ENCODE measurements at regions of chr13 and their contacts with region 1.

Region 1: GRCh38 chr13:73325711-73326558 is 267.1 kb downstream of the KLF5 start:
- DNase-seq: peak; percentile 45
- H3K4me3 Mint-ChIP-seq: no peak overlapping the region
- H3K27ac Mint-ChIP-seq: peak overlapping the region; percentile 83
- H3K4me1 Mint-ChIP-seq: peaks cover 11% of the 10 kb centered on the region
- H3K27me3 Mint-ChIP-seq: no peaks in the 10 kb centered on the region
- CTCF ChIP-seq: no peak

Region 2: GRCh38 chr13:73074036-73074435 is 251.9 kb before region 1 on chr13:
- CTCF ChIA-PET with region 1: no interaction called
- intact Hi-C with region 1: loop called (anchors 5 kb)
- DNase-seq: no peak
- H3K4me3 Mint-ChIP-seq: peak overlapping the region; percentile 55
- H3K27ac Mint-ChIP-seq: peak overlapping the region; percentile 93
- H3K4me1 Mint-ChIP-seq: no peaks in the 10 kb centered on the region
- H3K27me3 Mint-ChIP-seq: no peaks in the 10 kb centered on the region
- CTCF ChIP-seq: no peak

Region 3: GRCh38 chr13:73215807-73216206 is 110.1 kb before region 1 on chr13:
- CTCF ChIA-PET with region 1: no interaction called
- intact Hi-C with region 1: loop called (anchors 1 kb)
- DNase-seq: peak; percentile 55
- H3K4me3 Mint-ChIP-seq: peak overlapping the region; percentile 14
- H3K27ac Mint-ChIP-seq: peak overlapping the region; percentile 79
- H3K4me1 Mint-ChIP-seq: peaks cover 24% of the 10 kb centered on the region
- H3K27me3 Mint-ChIP-seq: no peaks in the 10 kb centered on the region
- CTCF ChIP-seq: no peak

Region 4: GRCh38 chr13:73248711-73249578 is 77.0 kb before region 1 on chr13:
- CTCF ChIA-PET with region 1: no interaction called
- intact Hi-C with region 1: loop called (anchors 5 kb)
- DNase-seq: peak; percentile 36
- H3K4me3 Mint-ChIP-seq: no peak overlapping the region
- H3K27ac Mint-ChIP-seq: peak overlapping the region; percentile 90
- H3K4me1 Mint-ChIP-seq: peaks cover 11% of the 10 kb centered on the region
- H3K27me3 Mint-ChIP-seq: no peaks in the 10 kb centered on the region
- CTCF ChIP-seq: no peak

Region 5: DNA sequence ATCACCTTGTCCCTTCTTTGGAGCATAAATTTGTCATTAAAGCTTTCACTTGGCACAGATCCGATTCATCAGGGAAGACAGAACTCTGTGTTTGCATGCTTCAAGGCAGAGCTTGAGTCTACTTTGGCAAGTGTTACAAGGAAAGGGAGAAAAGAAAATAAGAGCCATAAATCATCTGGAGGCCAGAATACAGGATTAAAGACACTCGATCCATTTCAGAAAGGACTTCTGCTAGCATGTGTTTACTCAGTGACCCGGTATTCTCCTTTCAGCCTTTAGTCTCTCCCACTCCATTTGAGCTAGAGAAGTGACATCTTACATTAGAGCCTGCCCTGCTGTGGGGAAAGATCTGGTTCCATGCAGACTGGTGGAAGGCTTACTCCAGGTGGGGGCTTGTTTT is 39.3 kb after region 1 on chr13:
- CTCF ChIA-PET with region 1: no interaction called
- intact Hi-C with region 1: loop called (anchors 5 kb)
- DNase-seq: peak; percentile 14
- H3K4me3 Mint-ChIP-seq: peak overlapping the region; percentile 19
- H3K27ac Mint-ChIP-seq: no peak overlapping the region
- H3K4me1 Mint-ChIP-seq: no peaks in the 10 kb centered on the region
- H3K27me3 Mint-ChIP-seq: no peaks in the 10 kb centered on the region
- CTCF ChIP-seq: no peak

Region 6: DNA sequence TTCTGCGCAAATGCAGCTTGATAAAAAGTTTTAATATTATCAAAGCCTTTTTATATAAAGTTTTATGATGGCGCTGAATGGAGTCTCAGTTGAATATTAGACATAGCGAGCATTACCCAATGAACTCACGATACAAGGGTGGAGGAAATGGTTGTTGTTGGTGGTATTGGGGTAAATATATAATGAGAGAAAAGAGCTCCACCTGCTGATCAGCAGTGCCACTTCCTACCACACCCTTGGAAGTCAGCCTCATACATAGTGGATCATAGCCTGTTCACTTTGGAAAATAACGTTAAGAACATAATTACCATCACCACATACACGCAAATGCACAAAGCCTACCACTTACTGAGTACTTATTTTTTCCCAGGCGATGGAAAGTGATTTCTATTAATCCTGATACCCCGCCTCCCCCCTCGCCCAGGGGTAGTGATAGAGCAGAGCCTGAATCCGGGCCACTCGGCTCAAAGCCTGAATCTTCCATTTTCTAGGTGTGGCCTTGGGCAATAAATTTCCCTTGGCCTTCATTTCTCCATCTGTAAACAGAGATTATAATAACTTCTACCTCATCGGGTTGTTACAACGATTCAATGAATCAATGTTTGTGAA is 91.2 kb after region 1 on chr13:
- CTCF ChIA-PET with region 1: interaction called, 3 read pairs
- intact Hi-C with region 1: loop called (anchors 5 kb)
- DNase-seq: no peak
- H3K4me3 Mint-ChIP-seq: no peak overlapping the region
- H3K27ac Mint-ChIP-seq: no peak overlapping the region
- H3K4me1 Mint-ChIP-seq: peaks cover 8% of the 10 kb centered on the region
- H3K27me3 Mint-ChIP-seq: no peaks in the 10 kb centered on the region
- CTCF ChIP-seq: no peak

Region 7: GRCh38 chr13:73702419-73703071 is 376.6 kb after region 1 on chr13:
- CTCF ChIA-PET with region 1: no interaction called
- intact Hi-C with region 1: loop called (anchors 5 kb)
- DNase-seq: no peak
- H3K4me3 Mint-ChIP-seq: no peak overlapping the region
- H3K27ac Mint-ChIP-seq: peak overlapping the region; percentile 84
- H3K4me1 Mint-ChIP-seq: peaks cover 12% of the 10 kb centered on the region
- H3K27me3 Mint-ChIP-seq: no peaks in the 10 kb centered on the region
- CTCF ChIP-seq: no peak

Region 8: DNA sequence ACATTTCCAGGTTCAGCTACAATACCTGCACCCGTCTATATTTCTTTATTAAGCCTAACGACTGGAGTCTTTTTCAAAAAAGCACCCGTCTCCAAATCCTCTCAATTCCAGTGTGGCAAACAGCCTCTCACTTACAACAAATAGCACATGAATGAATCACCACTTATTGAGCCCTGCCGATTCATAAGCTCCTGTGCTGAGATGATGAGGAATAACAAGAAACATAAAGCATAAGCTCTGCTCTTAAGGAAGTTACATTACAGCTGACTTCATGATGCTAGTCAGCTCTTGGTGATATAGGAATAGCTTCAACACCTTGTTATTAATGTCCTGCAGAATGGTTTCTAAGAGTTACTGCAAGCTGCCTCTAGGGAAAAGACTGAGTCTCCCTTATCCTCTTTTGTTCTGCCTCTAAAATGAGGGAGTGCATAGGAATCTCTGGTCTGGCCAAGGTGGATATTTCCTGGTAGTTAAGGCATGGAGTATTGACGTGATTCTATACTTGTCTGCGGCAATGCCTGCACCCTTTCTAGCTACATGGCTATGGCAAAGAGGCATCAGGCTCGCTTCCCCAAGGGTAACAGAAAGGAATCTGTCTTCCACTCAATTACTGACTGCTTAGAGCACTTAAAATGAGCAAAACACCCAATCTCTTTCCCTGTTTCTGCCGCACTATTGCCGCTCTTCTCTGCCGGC is 612.6 kb after region 1 on chr13:
- CTCF ChIA-PET with region 1: no interaction called
- intact Hi-C with region 1: no loop called
- DNase-seq: no peak
- H3K4me3 Mint-ChIP-seq: no peak overlapping the region
- H3K27ac Mint-ChIP-seq: no peak overlapping the region
- H3K4me1 Mint-ChIP-seq: peaks cover 10% of the 10 kb centered on the region
- H3K27me3 Mint-ChIP-seq: no peaks in the 10 kb centered on the region
- CTCF ChIP-seq: no peak

Measured in Calu3 (cell line).